ENCODE measurements at regions of chr16 and their contacts with region 1.

Region 1: GRCh38 chr16:89633064-89633631 is 19.7 kb downstream of the DPEP1 start:
- DNase-seq: no peak
- H3K4me3 ChIP-seq: no peak overlapping the region
- H3K4me1 ChIP-seq: no peaks in the 10 kb centered on the region
- H3K27me3 ChIP-seq: peaks cover 21% of the 10 kb centered on the region

Region 2: GRCh38 chr16:89201439-89202377 is 431.4 kb before region 1 on chr16:
- in situ Hi-C with region 1: no loop called
- DNase-seq: peak; percentile 59 to 94
- H3K4me3 ChIP-seq: peak overlapping the region; percentile 33
- H3K4me1 ChIP-seq: no peaks in the 10 kb centered on the region
- H3K27me3 ChIP-seq: peaks cover 28% of the 10 kb centered on the region

Region 3: DNA sequence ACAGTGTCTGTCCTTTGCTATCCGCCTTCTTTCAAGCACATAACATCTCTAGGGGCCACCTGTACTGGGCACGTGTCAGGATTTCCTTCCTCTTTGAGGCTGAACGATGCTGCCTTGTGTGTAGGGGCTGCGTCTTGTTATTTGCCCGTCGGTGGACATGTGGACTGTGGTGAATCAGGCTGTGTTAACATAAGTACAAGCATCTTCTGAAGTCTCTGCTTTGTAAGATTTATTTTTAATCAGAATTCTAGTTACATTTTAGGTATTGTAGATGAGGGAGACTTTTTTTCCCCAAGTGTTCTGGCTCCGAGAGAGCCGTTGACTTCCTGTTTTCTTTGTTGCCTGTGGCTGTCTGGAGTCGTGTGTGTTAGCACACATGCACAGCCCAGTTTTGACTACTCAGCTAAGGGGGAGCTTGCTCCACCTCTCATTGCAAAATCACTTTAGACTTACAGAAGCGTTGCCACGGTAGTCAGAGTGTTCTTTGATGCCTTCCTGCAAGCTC is 98.8 kb before region 1 on chr16:
- in situ Hi-C with region 1: loop called (anchors 25 kb)
- DNase-seq: no peak
- H3K4me3 ChIP-seq: no peak overlapping the region
- H3K4me1 ChIP-seq: no peaks in the 10 kb centered on the region
- H3K27me3 ChIP-seq: no peaks in the 10 kb centered on the region

Measured in HAP-1 (cell line).